Heart right ventricle (tissue), 16 donors: ENCODE measurements at regions of chr9 and their contacts with region 1.

Region 1: GRCh38 chr9:125374443-125375309 is 113.0 kb downstream of the GAPVD1 start:
- DNase-seq: peak; percentile 63
- ATAC-seq: peak; percentile 80 to 91 (median 86)
- H3K4me3 ChIP-seq: peak overlapping the region in 7 of 10 donors; percentile 27 to 52 (median 40)
- H3K27ac ChIP-seq: no peak overlapping the region
- H3K4me1 ChIP-seq: peaks cover 0 to 15% (median 4%) of the 10 kb centered on the region in 9 donors
- H3K27me3 ChIP-seq: peaks cover 0 to 6% (median 3%) of the 10 kb centered on the region in 7 donors
- CTCF ChIP-seq: peak; percentile 48 to 83 (median 78)

Region 2: DNA sequence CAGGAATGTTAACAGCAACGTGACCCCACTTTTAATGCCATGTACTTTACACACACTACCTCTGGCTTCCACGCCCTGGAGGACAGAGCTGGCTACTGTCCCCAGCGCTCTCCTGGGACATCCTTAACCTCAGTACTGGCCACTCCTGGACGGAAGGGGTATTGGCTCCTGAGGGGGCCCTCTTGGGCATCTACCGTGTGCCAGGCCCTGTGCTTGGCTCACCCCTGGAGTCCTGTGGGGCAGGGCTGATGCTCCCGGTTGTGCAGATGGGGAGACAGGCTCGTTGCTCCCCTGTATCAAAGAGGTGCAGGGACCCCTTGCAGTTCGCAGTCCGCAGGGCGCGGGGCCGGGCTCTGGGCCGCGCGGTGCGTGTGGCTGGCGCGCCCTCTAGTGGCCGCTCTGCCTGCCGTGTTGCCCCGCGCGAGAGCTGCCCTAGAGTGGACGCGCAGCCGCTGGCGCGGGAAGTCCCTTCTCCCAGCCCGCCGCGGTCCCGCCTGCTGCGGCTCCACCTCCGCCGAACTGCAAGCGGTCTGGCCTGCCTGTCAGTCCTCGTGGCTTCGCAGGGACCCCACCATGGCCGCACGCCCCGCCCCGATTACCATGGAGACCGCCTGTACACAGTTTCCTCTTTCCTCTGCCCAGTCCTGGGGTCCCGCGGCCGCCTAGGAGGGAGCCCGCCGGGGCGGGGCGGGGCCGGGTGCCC is 521.7 kb before region 1 on chr9 and contains the start of gene WDR38:
- intact Hi-C with region 1: loop called in 1 of 10 experiments (anchors 10 kb)
- DNase-seq: peak; percentile 81 to 83
- ATAC-seq: peak; percentile 89 to 93 (median 90)
- H3K4me3 ChIP-seq: peak within 1 kb of the TSS; percentile 9 to 56 (median 48)
- H3K27ac ChIP-seq: peak within 1 kb of the TSS; percentile 66 to 92 (median 79)
- H3K4me1 ChIP-seq: peaks cover 13 to 42% (median 25%) of the 10 kb centered on the region in 9 donors
- H3K27me3 ChIP-seq: no peaks in the 10 kb centered on the region
- CTCF ChIP-seq: peak; percentile 94 to 100 (median 99)
- total RNA-seq, gene WDR38: 0.22 TPM in 1 of 10 donors, not detected in the others

Region 3: DNA sequence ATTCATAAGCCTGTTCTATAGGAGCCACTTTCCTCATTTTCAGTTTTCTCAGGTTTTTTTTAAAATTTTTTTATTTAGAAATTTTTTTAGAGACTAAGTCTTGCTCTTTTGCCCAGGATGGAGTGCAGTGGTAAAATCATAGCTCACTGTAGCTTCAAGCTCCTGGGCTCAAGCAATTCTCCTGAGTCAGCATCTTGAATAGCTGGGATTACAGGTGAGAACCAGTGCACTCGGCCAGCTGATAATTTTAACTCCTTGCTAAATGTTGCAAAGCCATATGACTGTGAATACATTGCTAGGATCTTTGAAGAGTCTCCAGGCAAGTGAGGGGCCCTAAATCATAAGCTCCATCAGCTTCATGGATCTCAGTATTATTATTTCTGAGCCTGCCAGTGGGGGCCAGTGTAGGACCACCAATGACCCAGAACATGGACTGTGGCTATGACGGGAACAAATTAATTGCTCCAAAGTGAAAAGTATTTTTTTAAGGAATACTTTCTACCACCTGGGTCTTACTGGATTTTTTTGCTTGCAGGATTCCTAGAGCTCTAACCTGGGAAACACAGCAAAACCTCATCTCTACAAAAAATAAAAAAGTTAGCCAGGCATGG is 118.8 kb before region 1 on chr9:
- intact Hi-C with region 1: loop called in 3 of 10 experiments (anchors 5 to 10 kb)
- DNase-seq: no peak
- ATAC-seq: peak in 2 of 8 donors; percentile 58 to 71
- H3K4me3 ChIP-seq: no peak overlapping the region
- H3K27ac ChIP-seq: no peak overlapping the region
- H3K4me1 ChIP-seq: peaks cover 0 to 28% (median 0%) of the 10 kb centered on the region in 9 donors
- H3K27me3 ChIP-seq: no peaks in the 10 kb centered on the region
- CTCF ChIP-seq: peak in 7 of 9 donors; percentile 20 to 38 (median 32)

Region 4: GRCh38 chr9:125843646-125844045 is 469.0 kb after region 1 on chr9:
- intact Hi-C with region 1: no loop called
- DNase-seq: peak in 1 of 2 donors; percentile 10
- ATAC-seq: peak in 6 of 8 donors; percentile 34 to 67 (median 57)
- H3K4me3 ChIP-seq: peak overlapping the region in 2 of 10 donors; percentile 4 to 6
- H3K27ac ChIP-seq: peak overlapping the region in 5 of 10 donors; percentile 10 to 32 (median 21)
- H3K4me1 ChIP-seq: peaks cover 0 to 41% (median 20%) of the 10 kb centered on the region in 9 donors
- H3K27me3 ChIP-seq: no peaks in the 10 kb centered on the region
- CTCF ChIP-seq: no peak